CD8-positive, alpha-beta T cell (primary cell): ENCODE measurements at regions of chr15 and their contacts with region 1.

Region 1: GRCh38 chr15:90101969-90102890 is at the start of gene IDH2:
- DNase-seq: peak; percentile 26 to 89 (median 68)
- ATAC-seq: peak; percentile 68
- H3K4me3 ChIP-seq: peak within 1 kb of the TSS; percentile 69 to 81
- H3K4me3 Mint-ChIP-seq: peak within 1 kb of the TSS; percentile 91
- H3K27ac ChIP-seq: peak within 1 kb of the TSS; percentile 81 to 87
- H3K27ac Mint-ChIP-seq: peak within 1 kb of the TSS; percentile 100
- H3K4me1 ChIP-seq: peaks cover 41% of the 10 kb centered on the region
- H3K4me1 Mint-ChIP-seq: peaks cover 53% of the 10 kb centered on the region
- H3K27me3 ChIP-seq: no peaks in the 10 kb centered on the region
- H3K27me3 Mint-ChIP-seq: peaks cover 3% of the 10 kb centered on the region
- CTCF ChIP-seq: no peak
- total RNA-seq, gene IDH2: 41.5 to 42.2 TPM

Region 2: DNA sequence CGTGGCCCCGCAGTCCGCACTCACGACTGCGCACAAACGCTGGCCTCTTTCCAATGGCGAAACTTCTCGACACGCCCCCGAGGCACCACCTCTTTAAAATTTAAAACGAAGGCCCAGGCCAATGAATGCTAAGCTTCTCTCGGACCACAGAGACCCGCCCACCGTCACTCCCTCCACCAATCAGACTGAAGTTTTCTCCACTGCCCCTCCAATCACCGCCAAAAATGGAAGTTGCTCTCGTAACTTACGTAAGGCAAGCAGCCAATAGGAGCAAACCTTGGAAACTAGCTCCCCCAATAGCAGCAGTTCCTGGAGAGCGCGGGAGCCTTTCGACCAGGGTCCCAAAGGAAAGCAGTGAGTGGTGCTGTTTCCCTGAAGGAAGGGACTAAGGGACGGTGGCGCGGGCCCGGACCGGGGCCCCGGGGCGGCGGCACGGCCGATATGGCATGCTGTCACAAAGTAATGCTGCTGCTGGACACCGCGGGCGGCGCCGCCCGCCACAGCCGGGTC is 527.0 kb before region 1 on chr15 and contains the start of gene TICRR:
- CTCF ChIA-PET with region 1: no interaction called
- POLR2A ChIA-PET with region 1: no interaction called
- intact Hi-C with region 1: loop called in 1 of 2 experiments (anchors 10 kb)
- DNase-seq: peak; percentile 88 to 99 (median 92)
- ATAC-seq: peak; percentile 98
- H3K4me3 ChIP-seq: peak within 1 kb of the TSS; percentile 58 to 86
- H3K4me3 Mint-ChIP-seq: peak within 1 kb of the TSS; percentile 82
- H3K27ac ChIP-seq: no peak within 1 kb of the TSS
- H3K27ac Mint-ChIP-seq: peak within 1 kb of the TSS; percentile 13
- H3K4me1 ChIP-seq: peaks cover 6% of the 10 kb centered on the region
- H3K4me1 Mint-ChIP-seq: peaks cover 11% of the 10 kb centered on the region
- H3K27me3 ChIP-seq: no peaks in the 10 kb centered on the region
- H3K27me3 Mint-ChIP-seq: peaks cover 11% of the 10 kb centered on the region
- CTCF ChIP-seq: no peak
- total RNA-seq, gene TICRR: 0.11 TPM in 1 of 2 experiments, not detected in the other

Region 3: DNA sequence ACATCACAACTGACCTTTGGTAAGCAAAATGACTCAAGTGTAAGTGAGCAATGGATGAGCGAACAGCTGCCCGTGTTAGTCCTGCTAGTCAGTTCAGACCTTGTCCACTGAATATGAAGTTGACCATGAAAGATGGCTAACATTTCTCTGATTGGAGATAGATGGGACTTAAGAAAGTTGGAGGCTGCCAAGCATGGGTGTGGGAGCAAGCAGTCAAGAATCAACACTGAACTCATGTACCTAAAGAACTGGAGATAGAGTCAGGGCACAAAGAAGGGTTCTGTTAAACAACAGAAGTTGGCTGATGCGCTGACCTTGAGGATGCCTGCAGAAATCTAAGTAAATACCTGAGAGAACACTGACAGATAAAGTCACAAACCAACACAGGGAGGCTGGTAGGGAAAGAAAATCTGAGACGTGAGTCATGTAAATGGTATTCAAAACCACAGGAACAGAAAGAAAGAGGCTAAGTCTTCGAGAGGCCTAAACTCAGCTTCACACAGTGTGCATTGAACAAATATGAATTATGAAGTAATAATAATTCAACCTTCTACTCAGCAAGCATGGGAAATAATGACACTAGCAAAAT is 256.8 kb before region 1 on chr15:
- CTCF ChIA-PET with region 1: no interaction called
- POLR2A ChIA-PET with region 1: no interaction called
- intact Hi-C with region 1: no loop called
- DNase-seq: no peak
- ATAC-seq: no peak
- H3K4me3 ChIP-seq: no peak overlapping the region
- H3K4me3 Mint-ChIP-seq: no peak overlapping the region
- H3K27ac ChIP-seq: no peak overlapping the region
- H3K27ac Mint-ChIP-seq: no peak overlapping the region
- H3K4me1 ChIP-seq: no peaks in the 10 kb centered on the region
- H3K4me1 Mint-ChIP-seq: no peaks in the 10 kb centered on the region
- H3K27me3 ChIP-seq: no peaks in the 10 kb centered on the region
- H3K27me3 Mint-ChIP-seq: no peaks in the 10 kb centered on the region
- CTCF ChIP-seq: no peak

Region 4: GRCh38 chr15:90143166-90143655 is 41.0 kb after region 1 on chr15:
- CTCF ChIA-PET with region 1: interaction called, 3 read pairs
- POLR2A ChIA-PET with region 1: no interaction called
- intact Hi-C with region 1: loop called (anchors 2 to 5 kb)
- DNase-seq: peak; percentile 25 to 73 (median 62)
- ATAC-seq: peak; percentile 66
- H3K4me3 ChIP-seq: peak overlapping the region in 1 of 2 experiments; percentile 0
- H3K4me3 Mint-ChIP-seq: peak overlapping the region; percentile 61
- H3K27ac ChIP-seq: no peak overlapping the region
- H3K27ac Mint-ChIP-seq: no peak overlapping the region
- H3K4me1 ChIP-seq: peaks cover 16% of the 10 kb centered on the region
- H3K4me1 Mint-ChIP-seq: peaks cover 24% of the 10 kb centered on the region
- H3K27me3 ChIP-seq: no peaks in the 10 kb centered on the region
- H3K27me3 Mint-ChIP-seq: no peaks in the 10 kb centered on the region
- CTCF ChIP-seq: peak; percentile 70

Region 5: GRCh38 chr15:90265271-90266060 is 163.2 kb after region 1 on chr15 and contains the start of gene NGRN:
- CTCF ChIA-PET with region 1: no interaction called
- POLR2A ChIA-PET with region 1: interaction called, 4 read pairs
- intact Hi-C with region 1: loop called in 1 of 2 experiments (anchors 2 kb)
- DNase-seq: peak; percentile 84 to 95 (median 93)
- ATAC-seq: peak; percentile 81
- H3K4me3 ChIP-seq: peak within 1 kb of the TSS; percentile 79 to 86
- H3K4me3 Mint-ChIP-seq: peak within 1 kb of the TSS; percentile 94
- H3K27ac ChIP-seq: peak within 1 kb of the TSS; percentile 95 to 98
- H3K27ac Mint-ChIP-seq: peak within 1 kb of the TSS; percentile 98
- H3K4me1 ChIP-seq: peaks cover 43% of the 10 kb centered on the region
- H3K4me1 Mint-ChIP-seq: peaks cover 51% of the 10 kb centered on the region
- H3K27me3 ChIP-seq: no peaks in the 10 kb centered on the region
- H3K27me3 Mint-ChIP-seq: no peaks in the 10 kb centered on the region
- CTCF ChIP-seq: no peak
- total RNA-seq, gene NGRN: 57.8 to 62.0 TPM

Region 6: GRCh38 chr15:90496790-90497189 is 394.6 kb after region 1 on chr15:
- CTCF ChIA-PET with region 1: no interaction called
- POLR2A ChIA-PET with region 1: no interaction called
- intact Hi-C with region 1: no loop called
- DNase-seq: no peak
- ATAC-seq: no peak
- H3K4me3 ChIP-seq: no peak overlapping the region
- H3K4me3 Mint-ChIP-seq: no peak overlapping the region
- H3K27ac ChIP-seq: no peak overlapping the region
- H3K27ac Mint-ChIP-seq: peak overlapping the region; percentile 45
- H3K4me1 ChIP-seq: peaks cover 16% of the 10 kb centered on the region
- H3K4me1 Mint-ChIP-seq: peaks cover 19% of the 10 kb centered on the region
- H3K27me3 ChIP-seq: no peaks in the 10 kb centered on the region
- H3K27me3 Mint-ChIP-seq: no peaks in the 10 kb centered on the region
- CTCF ChIP-seq: no peak

Region 7: GRCh38 chr15:90654233-90655124 is 552.2 kb after region 1 on chr15:
- CTCF ChIA-PET with region 1: no interaction called
- POLR2A ChIA-PET with region 1: no interaction called
- intact Hi-C with region 1: loop called in 1 of 2 experiments (anchors 5 kb)
- DNase-seq: peak in 1 of 9 experiments; percentile 36
- ATAC-seq: no peak
- H3K4me3 ChIP-seq: no peak overlapping the region
- H3K4me3 Mint-ChIP-seq: no peak overlapping the region
- H3K27ac ChIP-seq: no peak overlapping the region
- H3K27ac Mint-ChIP-seq: no peak overlapping the region
- H3K4me1 ChIP-seq: peaks cover 61% of the 10 kb centered on the region
- H3K4me1 Mint-ChIP-seq: peaks cover 52% of the 10 kb centered on the region
- H3K27me3 ChIP-seq: peaks cover 4 to 11% of the 10 kb centered on the region in 2 experiments
- H3K27me3 Mint-ChIP-seq: peaks cover 10% of the 10 kb centered on the region
- CTCF ChIP-seq: no peak

Region 8: DNA sequence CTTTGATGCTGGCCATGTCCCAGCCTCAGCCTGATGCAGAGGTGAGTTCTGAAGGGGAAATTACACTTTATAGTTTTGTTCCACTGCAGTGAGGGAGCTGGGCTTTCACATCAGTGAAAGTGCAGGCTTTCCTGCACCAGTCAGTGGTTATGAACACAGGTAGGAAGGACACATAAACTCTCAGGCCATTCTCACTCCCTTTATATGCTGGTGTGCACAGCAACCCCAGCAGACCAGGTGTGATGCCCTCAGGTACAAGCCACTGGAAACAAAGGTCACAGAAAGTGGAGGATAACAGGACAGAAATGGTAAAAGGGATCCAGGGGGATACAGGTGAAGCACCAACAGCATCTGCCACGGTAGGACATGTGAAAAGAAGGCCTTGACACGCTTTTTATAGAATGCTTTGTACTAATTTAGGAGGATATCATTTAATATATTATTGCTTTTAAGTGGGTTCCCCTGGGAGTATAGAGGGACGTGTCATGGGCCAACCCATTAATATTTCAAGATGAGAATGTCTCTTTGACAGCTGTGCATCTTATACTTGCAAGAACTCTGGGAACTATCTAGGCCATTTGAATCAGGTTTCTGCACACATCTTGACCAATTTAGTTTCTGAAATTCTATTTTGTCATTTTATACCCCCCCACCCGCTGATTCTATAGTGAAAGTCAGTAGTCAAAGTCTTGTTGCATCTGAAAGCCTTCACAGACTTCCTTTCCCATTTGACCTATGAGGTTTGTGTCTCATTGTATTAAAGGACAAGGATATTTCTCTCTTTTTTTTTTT is 589.9 kb after region 1 on chr15:
- CTCF ChIA-PET with region 1: no interaction called
- POLR2A ChIA-PET with region 1: no interaction called
- intact Hi-C with region 1: no loop called
- DNase-seq: no peak
- ATAC-seq: no peak
- H3K4me3 ChIP-seq: no peak overlapping the region
- H3K4me3 Mint-ChIP-seq: no peak overlapping the region
- H3K27ac ChIP-seq: no peak overlapping the region
- H3K27ac Mint-ChIP-seq: no peak overlapping the region
- H3K4me1 ChIP-seq: peaks cover 3% of the 10 kb centered on the region
- H3K4me1 Mint-ChIP-seq: peaks cover 13% of the 10 kb centered on the region
- H3K27me3 ChIP-seq: no peaks in the 10 kb centered on the region
- H3K27me3 Mint-ChIP-seq: no peaks in the 10 kb centered on the region
- CTCF ChIP-seq: no peak